Posterior vena cava (tissue), 2 donors: ENCODE measurements at regions of chr2 and their contacts with region 1.

Region 1: GRCh38 chr2:76985387-76986136 is 536.6 kb downstream of the LRRTM4 start:
- DNase-seq: no peak

Region 2: GRCh38 chr2:77054938-77055337 is 69.4 kb after region 1 on chr2:
- intact Hi-C with region 1: loop called in 1 of 2 experiments (anchors 5 kb)
- DNase-seq: no peak